Activated CD4-positive, alpha-beta memory T cell treated with anti-CD3 and anti-CD28 coated beads, Interleukin-2, amount 10 ng/mL, durations not matched to agents 7 days and 5 days (primary cell): ENCODE measurements at regions of chr2 and their contacts with region 1.

Region 1: GRCh38 chr2:135052042-135052876 is at the start of gene RAB3GAP1:
- DNase-seq: peak; percentile 95
- H3K4me3 Mint-ChIP-seq: peak within 1 kb of the TSS; percentile 81
- H3K27ac Mint-ChIP-seq: peak within 1 kb of the TSS; percentile 99
- H3K4me1 Mint-ChIP-seq: peaks cover 39% of the 10 kb centered on the region
- H3K27me3 Mint-ChIP-seq: peaks cover 3% of the 10 kb centered on the region
- total RNA-seq, gene RAB3GAP1: 22.9 to 23.0 TPM

Region 2: GRCh38 chr2:134420259-134420658 is 632.0 kb before region 1 on chr2:
- CTCF ChIA-PET with region 1: no interaction called
- POLR2A ChIA-PET with region 1: no interaction called
- DNase-seq: no peak
- H3K4me3 Mint-ChIP-seq: no peak overlapping the region
- H3K27ac Mint-ChIP-seq: no peak overlapping the region
- H3K4me1 Mint-ChIP-seq: peaks cover 4% of the 10 kb centered on the region
- H3K27me3 Mint-ChIP-seq: no peaks in the 10 kb centered on the region

Region 3: DNA sequence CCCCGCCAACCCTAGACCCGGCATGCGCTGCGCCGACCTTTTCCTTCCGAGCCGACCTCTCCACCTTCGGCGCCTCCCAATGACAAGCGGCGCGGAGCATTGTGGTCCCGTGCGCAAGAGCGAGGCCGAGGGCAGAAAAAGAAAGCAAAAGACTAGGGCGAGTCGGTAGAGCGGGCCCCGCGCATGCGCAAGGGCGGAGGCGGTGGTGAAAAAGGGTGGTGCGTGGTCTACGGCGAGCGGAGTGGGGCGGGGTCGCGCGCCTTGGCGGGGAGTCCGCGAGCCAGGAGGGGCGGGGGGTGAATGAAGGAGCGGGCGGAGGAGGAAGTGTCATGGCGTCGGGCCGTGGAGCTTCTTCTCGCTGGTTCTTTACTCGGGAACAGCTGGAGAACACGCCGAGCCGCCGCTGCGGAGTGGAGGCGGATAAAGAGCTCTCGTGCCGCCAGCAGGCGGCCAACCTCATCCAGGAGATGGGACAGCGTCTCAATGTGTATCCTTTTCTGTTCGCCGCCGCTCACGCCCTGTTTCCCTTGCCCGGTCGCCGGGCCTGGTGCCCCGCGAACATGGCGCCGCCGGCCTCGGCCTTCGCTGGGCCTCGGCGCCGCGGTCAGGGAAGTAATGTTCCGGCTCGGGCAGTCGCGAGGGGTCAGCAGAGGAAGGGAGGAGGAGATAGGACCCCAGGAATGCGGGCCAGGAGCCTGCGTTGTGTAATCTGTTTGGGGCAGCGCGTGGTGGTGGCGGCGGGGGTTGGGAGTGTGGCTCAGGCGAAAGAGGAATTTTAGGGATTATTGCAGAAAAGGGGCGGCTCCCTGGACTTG is 133.5 kb before region 1 on chr2 and contains the start of gene CCNT2:
- CTCF ChIA-PET with region 1: no interaction called
- POLR2A ChIA-PET with region 1: interaction called, 15 read pairs
- DNase-seq: peak; percentile 99
- H3K4me3 Mint-ChIP-seq: peak within 1 kb of the TSS; percentile 93
- H3K27ac Mint-ChIP-seq: peak within 1 kb of the TSS; percentile 95
- H3K4me1 Mint-ChIP-seq: peaks cover 33% of the 10 kb centered on the region
- H3K27me3 Mint-ChIP-seq: peaks cover 4% of the 10 kb centered on the region
- total RNA-seq, gene CCNT2: 35.8 to 37.4 TPM